HepG2 (cell line): ENCODE measurements at regions of chr17 and their contacts with region 1.

Region 1: DNA sequence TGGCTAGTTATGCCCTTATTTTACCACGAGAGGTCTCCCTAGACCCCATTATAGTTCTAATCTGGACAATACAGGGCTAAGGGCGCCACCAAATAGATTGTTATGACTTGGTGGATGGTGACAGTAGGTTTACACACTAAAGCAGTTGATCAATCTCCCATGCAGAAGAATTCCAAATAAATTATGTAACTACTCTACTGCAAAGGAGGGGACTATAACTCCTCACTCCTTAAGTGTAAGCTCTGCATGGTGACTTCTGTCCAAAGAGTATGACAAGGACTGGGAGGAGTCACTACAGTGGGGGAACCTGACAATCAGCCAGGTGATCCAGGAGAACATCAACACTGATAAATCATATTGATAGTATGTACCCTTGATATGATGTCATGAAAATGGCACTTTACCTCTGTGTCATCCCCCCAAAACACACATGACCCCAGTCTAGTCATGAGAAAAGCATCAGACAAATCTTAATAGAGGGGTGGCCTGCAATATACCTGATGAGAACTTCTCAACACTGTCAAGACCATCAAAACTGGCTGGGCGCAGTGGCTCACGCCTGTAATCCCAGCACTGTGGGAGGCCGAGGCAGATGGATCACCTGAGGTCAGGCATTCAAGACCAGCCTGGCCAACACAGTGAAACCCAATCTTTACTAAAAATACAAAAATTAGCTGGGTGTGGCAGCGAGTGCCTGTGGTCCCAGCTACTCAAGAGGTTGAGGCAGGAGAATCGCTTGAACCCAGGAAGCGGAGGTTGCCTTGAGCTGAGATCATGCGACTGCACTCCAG is 20.1 kb upstream of the YPEL2 start:
- DNase-seq: peak; percentile 79
- ATAC-seq: peak; percentile 89
- H3K4me3 ChIP-seq: no peak overlapping the region
- H3K27ac ChIP-seq: no peak overlapping the region
- H3K4me1 ChIP-seq: peaks cover 31% of the 10 kb centered on the region
- H3K27me3 ChIP-seq: no peaks in the 10 kb centered on the region; a peak in 1 of 5 replicates
- CTCF ChIP-seq: peak; percentile 95
- EP300 ChIP-seq: 0 out of 4 replicates have a peak, but pooled peaks of 1 of the 2 experiments have one; percentile 14
- POLR2A ChIP-seq: no peak
- RAD21 ChIP-seq: peak; percentile 95

Region 2: DNA sequence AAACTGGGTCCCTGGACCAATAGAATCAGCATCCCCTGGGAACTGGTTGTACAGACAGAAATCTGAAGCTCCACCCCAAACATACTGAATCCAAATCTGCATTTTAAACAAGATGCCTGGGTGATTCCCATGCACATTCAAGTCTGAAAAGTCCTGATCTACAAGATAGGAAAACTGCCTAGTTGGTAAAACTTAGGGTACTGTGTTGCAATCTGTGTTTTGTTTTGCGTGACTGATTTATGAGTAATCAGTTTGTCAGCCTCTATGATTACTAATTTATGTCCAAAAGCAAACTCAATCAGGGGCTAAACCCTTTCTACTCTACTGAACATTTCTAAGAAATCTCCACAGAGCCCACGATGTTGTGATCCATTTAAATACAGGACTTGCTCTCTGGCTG is 123.9 kb after region 1 on chr17:
- CTCF ChIA-PET with region 1: interaction called, 94 read pairs
- POLR2A ChIA-PET with region 1: interaction called, 5 read pairs
- in situ Hi-C with region 1: no loop called
- intact Hi-C with region 1: loop called (anchors 1 kb)
- DNase-seq: no peak
- ATAC-seq: no peak
- H3K4me3 ChIP-seq: no peak overlapping the region
- H3K27ac ChIP-seq: no peak overlapping the region
- H3K4me1 ChIP-seq: peaks cover 71% of the 10 kb centered on the region
- H3K27me3 ChIP-seq: no peaks in the 10 kb centered on the region; a peak in 1 of 5 replicates
- CTCF ChIP-seq: no peak
- EP300 ChIP-seq: no peak
- POLR2A ChIP-seq: no peak
- RAD21 ChIP-seq: no peak

Region 3: GRCh38 chr17:59440784-59441441 is 129.6 kb after region 1 on chr17:
- CTCF ChIA-PET with region 1: interaction called, 94 read pairs
- POLR2A ChIA-PET with region 1: interaction called, 5 read pairs
- in situ Hi-C with region 1: no loop called
- intact Hi-C with region 1: loop called (anchors 1 kb)
- DNase-seq: peak; percentile 88
- ATAC-seq: peak; percentile 98
- H3K4me3 ChIP-seq: peak overlapping the region in 1 of 3 experiments; percentile 5; a peak in 1 of 6 replicates
- H3K27ac ChIP-seq: no peak overlapping the region
- H3K4me1 ChIP-seq: peaks cover 42% of the 10 kb centered on the region
- H3K27me3 ChIP-seq: no peaks in the 10 kb centered on the region; a peak in 1 of 5 replicates
- CTCF ChIP-seq: peak; percentile 97
- EP300 ChIP-seq: no peak
- POLR2A ChIP-seq: no peak
- RAD21 ChIP-seq: peak; percentile 95

Region 4: GRCh38 chr17:59521204-59522126 is 210.1 kb after region 1 on chr17:
- CTCF ChIA-PET with region 1: interaction called, 8 read pairs
- POLR2A ChIA-PET with region 1: no interaction called
- in situ Hi-C with region 1: no loop called
- intact Hi-C with region 1: loop called (anchors 2 kb)
- DNase-seq: peak; percentile 74
- ATAC-seq: peak; percentile 97
- H3K4me3 ChIP-seq: peak overlapping the region in 2 of 3 experiments; percentile 16 to 35; a peak in 4 of 6 replicates
- H3K27ac ChIP-seq: peak overlapping the region; percentile 34
- H3K4me1 ChIP-seq: peaks cover 52% of the 10 kb centered on the region
- H3K27me3 ChIP-seq: no peaks in the 10 kb centered on the region
- CTCF ChIP-seq: peak; percentile 97
- EP300 ChIP-seq: peak in 1 of 2 experiments; percentile 61; a peak in 2 of 4 replicates
- POLR2A ChIP-seq: no peak
- RAD21 ChIP-seq: peak; percentile 88

Region 5: GRCh38 chr17:59558977-59559376 is 247.7 kb after region 1 on chr17:
- CTCF ChIA-PET with region 1: interaction called, 4 read pairs
- POLR2A ChIA-PET with region 1: no interaction called
- in situ Hi-C with region 1: loop called (anchors 5 kb)
- intact Hi-C with region 1: loop called (anchors 2 kb)
- DNase-seq: peak; percentile 17
- ATAC-seq: no peak
- H3K4me3 ChIP-seq: no peak overlapping the region
- H3K27ac ChIP-seq: no peak overlapping the region
- H3K4me1 ChIP-seq: peaks cover 18% of the 10 kb centered on the region
- H3K27me3 ChIP-seq: peaks cover 0 to 10% of the 10 kb centered on the region in 2 experiments; a peak in 1 of 5 replicates
- CTCF ChIP-seq: peak; percentile 35; the same call in 1 of the 2 replicates
- EP300 ChIP-seq: no peak
- POLR2A ChIP-seq: no peak
- RAD21 ChIP-seq: no peak

Region 6: DNA sequence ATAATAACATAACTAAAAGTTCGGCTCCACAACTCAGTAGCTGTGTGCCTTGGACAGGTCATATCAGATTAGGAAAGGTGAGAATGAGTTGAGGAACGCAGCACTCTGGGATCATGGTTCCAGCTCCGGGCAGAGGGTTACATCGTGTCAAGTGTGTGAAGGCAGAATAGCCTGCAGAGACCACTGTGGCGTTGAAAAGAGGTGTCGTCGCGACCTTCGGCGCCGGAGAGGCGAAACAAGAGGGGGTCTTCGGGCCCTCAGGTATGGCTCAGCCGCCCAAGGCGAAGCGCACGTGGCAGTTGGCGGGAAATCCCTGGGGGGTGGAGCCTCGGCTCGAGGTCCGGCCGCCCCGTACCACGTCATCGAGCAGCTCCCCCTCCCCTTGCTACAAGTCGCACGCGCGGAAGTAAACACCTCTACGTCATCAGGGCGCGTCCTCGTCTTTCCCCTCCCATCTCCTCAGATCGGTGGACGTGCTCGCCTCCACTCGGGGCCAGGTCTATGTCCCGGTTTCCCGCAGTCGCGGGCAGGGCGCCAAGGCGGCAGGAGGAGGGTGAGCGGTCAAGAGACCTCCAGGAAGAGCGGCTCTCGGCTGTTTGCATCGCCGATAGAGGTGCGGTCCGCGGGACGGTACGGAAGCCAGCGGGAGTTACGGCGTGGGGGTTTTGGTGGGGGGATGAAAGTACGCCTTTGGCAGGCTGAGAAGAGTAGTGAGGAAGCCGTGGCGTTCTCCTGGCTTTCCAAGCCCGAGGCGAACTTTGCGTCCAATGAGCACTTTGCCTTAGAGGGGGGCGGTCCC is 254.0 kb after region 1 on chr17 and contains the start of gene DHX40:
- CTCF ChIA-PET with region 1: no interaction called
- POLR2A ChIA-PET with region 1: no interaction called
- in situ Hi-C with region 1: loop called (anchors 5 kb)
- intact Hi-C with region 1: no loop called
- DNase-seq: peak; percentile 82
- ATAC-seq: peak; percentile 73
- H3K4me3 ChIP-seq: peak within 1 kb of the TSS; percentile 88 to 95 (median 88)
- H3K27ac ChIP-seq: peak within 1 kb of the TSS; percentile 29
- H3K4me1 ChIP-seq: peaks cover 16% of the 10 kb centered on the region
- H3K27me3 ChIP-seq: no peaks in the 10 kb centered on the region; a peak in 1 of 5 replicates
- CTCF ChIP-seq: no peak; the same call in none of the 2 replicates
- EP300 ChIP-seq: 0 out of 4 replicates have a peak, but pooled peaks of 1 of the 2 experiments have one; percentile 30
- POLR2A ChIP-seq: peak; percentile 61 to 68; a peak in 3 of 4 replicates
- RAD21 ChIP-seq: no peak
- total RNA-seq, gene DHX40: 37.0 and 62.6 TPM in 2 replicates